ENCODE measurements at regions of chr15 and their contacts with region 1.

Region 1: GRCh38 chr15:90839187-90840071 is 29.0 kb upstream of the FURIN start:
- DNase-seq: peak; percentile 75
- ATAC-seq: peak; percentile 34
- H3K4me3 Mint-ChIP-seq: peak overlapping the region; percentile 80
- H3K27ac Mint-ChIP-seq: peak overlapping the region; percentile 92
- H3K4me1 Mint-ChIP-seq: peaks cover 63% of the 10 kb centered on the region
- H3K27me3 Mint-ChIP-seq: no peaks in the 10 kb centered on the region

Region 2: DNA sequence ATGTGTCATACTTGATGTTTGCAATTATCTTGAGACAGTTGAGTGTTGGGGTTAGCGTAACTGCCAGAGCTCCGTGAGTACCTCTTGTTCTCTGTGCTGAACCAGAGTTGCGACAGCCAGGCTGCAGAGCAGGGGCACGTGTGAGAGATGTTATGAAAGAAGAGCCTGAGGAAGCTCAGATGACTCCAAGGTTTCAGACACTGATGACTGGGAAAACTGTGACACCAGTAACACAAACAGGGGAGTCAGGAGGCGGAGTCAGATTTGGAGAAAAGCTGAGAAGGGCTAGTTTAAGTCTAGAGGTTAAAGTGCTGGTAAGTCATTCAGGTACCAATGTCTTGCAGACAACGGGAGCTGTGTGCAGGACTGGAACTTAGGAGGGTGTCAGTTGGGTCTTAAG is 77.3 kb before region 1 on chr15:
- CTCF ChIA-PET with region 1: no interaction called
- POLR2A ChIA-PET with region 1: no interaction called
- intact Hi-C with region 1: no loop called
- DNase-seq: no peak
- ATAC-seq: no peak
- H3K4me3 Mint-ChIP-seq: no peak overlapping the region
- H3K27ac Mint-ChIP-seq: no peak overlapping the region
- H3K4me1 Mint-ChIP-seq: no peaks in the 10 kb centered on the region
- H3K27me3 Mint-ChIP-seq: no peaks in the 10 kb centered on the region

Region 3: GRCh38 chr15:90851114-90851513 is 11.7 kb after region 1 on chr15:
- CTCF ChIA-PET with region 1: interaction called, 29 read pairs
- POLR2A ChIA-PET with region 1: interaction called, 40 read pairs
- intact Hi-C with region 1: loop called (anchors 1 kb)
- DNase-seq: peak; percentile 69
- ATAC-seq: peak; percentile 33
- H3K4me3 Mint-ChIP-seq: peak overlapping the region; percentile 41
- H3K27ac Mint-ChIP-seq: peak overlapping the region; percentile 95
- H3K4me1 Mint-ChIP-seq: peaks cover 53% of the 10 kb centered on the region
- H3K27me3 Mint-ChIP-seq: no peaks in the 10 kb centered on the region

Region 4: GRCh38 chr15:90862964-90863778 is 23.7 kb after region 1 on chr15:
- CTCF ChIA-PET with region 1: interaction called, 3 read pairs
- POLR2A ChIA-PET with region 1: interaction called, 13 read pairs
- intact Hi-C with region 1: loop called in 1 of 2 experiments (anchors 2 kb)
- DNase-seq: no peak
- ATAC-seq: no peak
- H3K4me3 Mint-ChIP-seq: no peak overlapping the region
- H3K27ac Mint-ChIP-seq: peak overlapping the region; percentile 85
- H3K4me1 Mint-ChIP-seq: peaks cover 48% of the 10 kb centered on the region
- H3K27me3 Mint-ChIP-seq: peaks cover 5% of the 10 kb centered on the region

Measured in activated CD4-positive, alpha-beta T cell treated with anti-CD3 and anti-CD28 coated beads for 36 hours (primary cell).